Activated CD4-positive, alpha-beta T cell treated with anti-CD3 and anti-CD28 coated beads for 36 hours (primary cell): ENCODE measurements at regions of chr4 and their contacts with region 1.

Region 1: GRCh38 chr4:56689206-56689944 is 8.3 kb upstream of the HOPX start:
- DNase-seq: no peak
- ATAC-seq: no peak
- H3K4me3 Mint-ChIP-seq: no peak overlapping the region
- H3K27ac Mint-ChIP-seq: no peak overlapping the region
- H3K4me1 Mint-ChIP-seq: peaks cover under 1% of the 10 kb centered on the region
- H3K27me3 Mint-ChIP-seq: peaks cover 12% of the 10 kb centered on the region

Region 2: DNA sequence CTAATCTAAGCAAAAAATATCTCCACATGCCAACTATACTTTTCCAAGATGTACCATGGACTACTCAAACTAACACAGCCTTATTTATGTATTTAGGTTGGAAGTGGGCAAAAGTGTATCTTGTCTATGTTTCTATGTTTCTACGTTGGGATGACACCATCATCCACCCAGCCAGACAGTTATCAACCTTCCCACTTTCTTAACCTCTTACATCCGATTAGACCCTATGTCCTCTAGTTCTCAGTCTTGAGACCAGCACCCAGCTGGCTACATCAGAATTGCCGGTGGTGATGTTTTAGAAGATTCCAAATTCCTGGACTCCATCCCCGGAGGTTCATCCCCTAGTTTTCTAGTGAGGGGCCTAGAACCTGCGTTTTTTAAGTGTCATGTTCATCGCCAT is 301.1 kb before region 1 on chr4:
- CTCF ChIA-PET with region 1: no interaction called
- POLR2A ChIA-PET with region 1: no interaction called
- intact Hi-C with region 1: no loop called
- DNase-seq: no peak
- ATAC-seq: no peak
- H3K4me3 Mint-ChIP-seq: peak overlapping the region; percentile 98
- H3K27ac Mint-ChIP-seq: peak overlapping the region; percentile 100
- H3K4me1 Mint-ChIP-seq: peaks cover 31% of the 10 kb centered on the region
- H3K27me3 Mint-ChIP-seq: no peaks in the 10 kb centered on the region

Region 3: GRCh38 chr4:56668298-56668697 is 21.1 kb before region 1 on chr4:
- CTCF ChIA-PET with region 1: no interaction called
- POLR2A ChIA-PET with region 1: interaction called, 11 read pairs
- intact Hi-C with region 1: no loop called
- DNase-seq: peak; percentile 50
- ATAC-seq: peak; percentile 58
- H3K4me3 Mint-ChIP-seq: no peak overlapping the region
- H3K27ac Mint-ChIP-seq: no peak overlapping the region
- H3K4me1 Mint-ChIP-seq: no peaks in the 10 kb centered on the region
- H3K27me3 Mint-ChIP-seq: peaks cover 9% of the 10 kb centered on the region